Common myeloid progenitor, CD34-positive (primary cell): ENCODE measurements at regions of chr5 and their contacts with region 1.

Region 1: DNA sequence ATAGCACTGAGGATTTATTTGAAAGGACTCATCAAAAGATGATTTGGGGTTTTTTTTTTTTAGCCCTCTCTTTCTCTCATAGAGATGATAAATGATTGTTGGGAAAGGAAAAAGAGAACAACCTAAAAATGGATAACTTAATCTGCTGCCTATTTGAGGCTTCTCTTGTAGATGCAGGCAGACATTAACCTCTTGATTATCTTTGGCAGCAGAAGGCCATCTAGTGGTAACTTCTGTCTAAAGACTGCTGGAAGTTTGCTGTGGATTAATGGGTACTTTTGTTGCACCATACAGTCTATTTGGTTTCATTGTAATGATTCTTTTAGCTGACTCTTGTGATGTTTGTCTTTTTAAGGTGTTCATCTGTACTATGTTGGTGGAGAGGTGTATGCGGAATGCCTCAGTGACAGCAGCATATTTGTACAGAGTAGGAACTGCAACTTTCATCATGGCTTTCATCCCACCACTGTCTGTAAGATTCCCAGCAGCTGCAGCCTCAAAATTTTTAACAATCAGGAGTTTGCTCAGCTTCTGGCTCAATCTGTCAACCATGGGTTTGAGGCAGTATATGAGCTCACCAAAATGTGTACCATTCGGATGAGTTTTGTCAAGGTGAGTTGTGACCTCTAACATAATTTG is 18.8 kb downstream of the SMIM32 start:
- DNase-seq: peak; percentile 73 to 75 (median 74)
- H3K4me3 ChIP-seq: no peak overlapping the region
- H3K27ac ChIP-seq: no peak overlapping the region
- H3K4me1 ChIP-seq: no peaks in the 10 kb centered on the region
- H3K27me3 ChIP-seq: no peaks in the 10 kb centered on the region

Region 2: GRCh38 chr5:135977375-135977928 is 196.7 kb before region 1 on chr5:
- CTCF ChIA-PET with region 1: interaction called, 11 read pairs
- POLR2A ChIA-PET with region 1: no interaction called
- DNase-seq: peak; percentile 55 to 73 (median 64)
- H3K4me3 ChIP-seq: no peak overlapping the region
- H3K27ac ChIP-seq: no peak overlapping the region
- H3K4me1 ChIP-seq: no peaks in the 10 kb centered on the region
- H3K27me3 ChIP-seq: peaks cover 2 to 33% (median 19%) of the 10 kb centered on the region in 5 experiments

Region 3: GRCh38 chr5:136066661-136067271 is 107.4 kb before region 1 on chr5:
- CTCF ChIA-PET with region 1: no interaction called
- POLR2A ChIA-PET with region 1: no interaction called
- DNase-seq: peak in 2 of 3 donors; percentile 8 to 16
- H3K4me3 ChIP-seq: no peak overlapping the region
- H3K27ac ChIP-seq: no peak overlapping the region
- H3K4me1 ChIP-seq: no peaks in the 10 kb centered on the region
- H3K27me3 ChIP-seq: peaks cover 0 to 10% (median 2%) of the 10 kb centered on the region in 5 experiments

Region 4: GRCh38 chr5:136202469-136203205 is 28.5 kb after region 1 on chr5:
- CTCF ChIA-PET with region 1: no interaction called
- POLR2A ChIA-PET with region 1: no interaction called
- DNase-seq: no peak
- H3K4me3 ChIP-seq: no peak overlapping the region
- H3K27ac ChIP-seq: no peak overlapping the region
- H3K4me1 ChIP-seq: peaks cover 0 to 2% (median 0%) of the 10 kb centered on the region in 4 experiments
- H3K27me3 ChIP-seq: peaks cover 2 to 63% (median 32%) of the 10 kb centered on the region in 5 experiments